ENCODE measurements at regions of chr11 and their contacts with region 1.

Region 1: GRCh38 chr11:33802414-33802950 is 28.2 kb upstream of the FBXO3 start:
- DNase-seq: peak; percentile 88
- ATAC-seq: peak; percentile 99
- H3K4me3 ChIP-seq: peak overlapping the region; percentile 32
- H3K27ac ChIP-seq: no peak overlapping the region; the same call in 1 of the 2 replicates
- H3K4me1 ChIP-seq: no peaks in the 10 kb centered on the region; the same call in 1 of the 2 replicates
- H3K27me3 ChIP-seq: peaks cover 12% of the 10 kb centered on the region
- CTCF ChIP-seq: no peak
- POLR2A ChIP-seq: no peak
- RAD21 ChIP-seq: no peak

Region 2: DNA sequence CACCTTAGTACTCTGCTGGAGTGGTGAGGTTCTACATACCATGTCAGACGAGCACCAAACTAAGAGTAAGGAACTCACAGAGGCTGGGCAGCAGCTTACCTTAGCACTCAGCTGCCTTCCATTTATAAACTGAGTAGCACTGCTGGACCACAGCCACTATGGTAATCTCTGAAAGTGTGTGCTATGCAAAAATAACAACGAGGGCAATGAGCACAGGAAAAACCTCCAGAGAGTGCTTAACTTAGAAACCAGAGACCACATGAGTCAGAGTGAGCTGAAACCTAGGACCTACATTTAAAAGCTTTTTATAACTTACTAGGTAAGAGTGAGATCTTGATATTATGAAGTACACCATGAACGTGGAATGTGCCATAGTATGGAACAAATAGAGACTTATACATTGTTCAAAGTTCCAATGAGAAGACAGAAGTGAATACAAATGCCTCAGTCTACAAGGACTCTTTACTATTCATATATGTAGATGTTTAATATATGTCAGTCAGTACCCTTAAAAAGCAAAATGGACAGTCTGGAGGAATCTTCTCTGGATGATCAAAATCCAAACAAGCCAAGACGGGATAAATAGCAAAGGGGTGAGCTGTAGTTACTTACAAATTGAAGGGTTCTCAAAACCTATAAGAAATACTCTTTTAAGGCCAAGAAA is 49.0 kb before region 1 on chr11:
- CTCF ChIA-PET with region 1: no interaction called
- POLR2A ChIA-PET with region 1: no interaction called
- dilution Hi-C with region 1: no loop called
- in situ Hi-C with region 1: no loop called
- intact Hi-C with region 1: no loop called
- DNase-seq: peak; percentile 88
- ATAC-seq: peak; percentile 95
- H3K4me3 ChIP-seq: no peak overlapping the region
- H3K27ac ChIP-seq: no peak overlapping the region
- H3K4me1 ChIP-seq: peaks cover 3% of the 10 kb centered on the region; the same call in 1 of the 2 replicates
- H3K27me3 ChIP-seq: no peaks in the 10 kb centered on the region
- CTCF ChIP-seq: no peak
- POLR2A ChIP-seq: no peak
- RAD21 ChIP-seq: no peak

Region 3: GRCh38 chr11:33773987-33774735 is 28.3 kb before region 1 on chr11 and contains the start of gene FBXO3:
- CTCF ChIA-PET with region 1: no interaction called
- POLR2A ChIA-PET with region 1: no interaction called
- dilution Hi-C with region 1: no loop called
- in situ Hi-C with region 1: no loop called
- intact Hi-C with region 1: loop called (anchors 1 kb)
- DNase-seq: peak; percentile 58
- ATAC-seq: peak; percentile 92
- H3K4me3 ChIP-seq: peak within 1 kb of the TSS; percentile 82
- H3K27ac ChIP-seq: peak within 1 kb of the TSS; percentile 86
- H3K4me1 ChIP-seq: peaks cover 13% of the 10 kb centered on the region
- H3K27me3 ChIP-seq: no peaks in the 10 kb centered on the region
- CTCF ChIP-seq: no peak
- POLR2A ChIP-seq: peak; percentile 19; the same call in 1 of the 2 replicates
- RAD21 ChIP-seq: no peak
- total RNA-seq, gene FBXO3: 51.1 and 65.3 TPM in 2 replicates